CD8-positive, alpha-beta T cell (primary cell): ENCODE measurements at regions of chr1 and their contacts with region 1.

Region 1: DNA sequence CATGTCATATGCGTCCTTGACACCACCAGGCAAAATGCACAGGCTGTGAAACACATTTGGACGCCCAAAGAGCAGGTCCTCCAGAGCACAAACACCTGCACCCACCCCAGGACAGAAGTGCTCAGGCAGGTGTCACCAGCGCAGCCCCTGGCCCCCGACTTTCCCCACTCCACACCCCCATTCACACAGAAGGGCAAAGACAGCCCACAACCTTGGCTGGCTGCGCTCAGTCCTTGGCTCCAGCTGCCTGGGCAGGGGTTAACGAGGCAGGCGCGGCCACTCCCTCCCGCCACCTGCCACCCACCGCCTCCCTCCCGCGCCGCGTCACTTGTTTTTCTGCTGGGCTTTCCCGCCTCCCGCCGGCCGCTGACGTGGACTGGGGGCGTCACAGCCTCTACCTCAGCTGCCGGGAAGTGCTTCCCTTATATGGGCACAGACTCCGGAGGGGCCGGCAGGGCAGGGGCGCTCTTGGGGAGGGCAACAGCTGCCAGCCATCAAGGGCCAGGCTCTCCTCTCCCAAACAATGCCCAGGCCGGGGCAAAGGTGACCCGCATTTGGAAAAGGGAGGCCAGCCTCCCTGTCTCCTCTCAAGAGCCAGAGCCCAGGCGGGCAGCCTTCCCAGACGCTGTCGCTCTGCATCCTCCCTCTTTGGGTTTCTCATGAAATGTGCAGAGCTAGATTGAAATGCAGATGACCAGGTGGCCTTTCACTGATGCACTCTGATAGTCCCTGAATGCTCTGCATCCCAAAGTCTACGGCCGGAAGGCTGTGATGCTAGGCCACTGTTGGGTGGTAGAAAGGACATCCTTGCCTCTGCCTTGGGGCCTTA is 14.8 kb upstream of the BTG2 start:
- DNase-seq: peak; percentile 94 to 99 (median 98)
- ATAC-seq: peak; percentile 60
- H3K4me3 ChIP-seq: peak overlapping the region; percentile 29 to 61
- H3K4me3 Mint-ChIP-seq: peak overlapping the region; percentile 72
- H3K27ac ChIP-seq: peak overlapping the region; percentile 99 to 100
- H3K27ac Mint-ChIP-seq: peak overlapping the region; percentile 98
- H3K4me1 ChIP-seq: peaks cover 67% of the 10 kb centered on the region
- H3K4me1 Mint-ChIP-seq: peaks cover 85% of the 10 kb centered on the region
- H3K27me3 ChIP-seq: no peaks in the 10 kb centered on the region
- H3K27me3 Mint-ChIP-seq: no peaks in the 10 kb centered on the region
- CTCF ChIP-seq: no peak

Region 2: GRCh38 chr1:203273206-203273868 is 17.1 kb before region 1 on chr1:
- CTCF ChIA-PET with region 1: interaction called, 388 read pairs
- POLR2A ChIA-PET with region 1: interaction called, 51 read pairs
- intact Hi-C with region 1: loop called (anchors 1 kb)
- DNase-seq: peak; percentile 82 to 97 (median 92)
- ATAC-seq: peak; percentile 66
- H3K4me3 ChIP-seq: peak overlapping the region; percentile 37 to 63
- H3K4me3 Mint-ChIP-seq: peak overlapping the region; percentile 74
- H3K27ac ChIP-seq: peak overlapping the region; percentile 10 to 48
- H3K27ac Mint-ChIP-seq: peak overlapping the region; percentile 92
- H3K4me1 ChIP-seq: peaks cover 49% of the 10 kb centered on the region
- H3K4me1 Mint-ChIP-seq: peaks cover 52% of the 10 kb centered on the region
- H3K27me3 ChIP-seq: no peaks in the 10 kb centered on the region
- H3K27me3 Mint-ChIP-seq: no peaks in the 10 kb centered on the region
- CTCF ChIP-seq: peak; percentile 94

Region 3: DNA sequence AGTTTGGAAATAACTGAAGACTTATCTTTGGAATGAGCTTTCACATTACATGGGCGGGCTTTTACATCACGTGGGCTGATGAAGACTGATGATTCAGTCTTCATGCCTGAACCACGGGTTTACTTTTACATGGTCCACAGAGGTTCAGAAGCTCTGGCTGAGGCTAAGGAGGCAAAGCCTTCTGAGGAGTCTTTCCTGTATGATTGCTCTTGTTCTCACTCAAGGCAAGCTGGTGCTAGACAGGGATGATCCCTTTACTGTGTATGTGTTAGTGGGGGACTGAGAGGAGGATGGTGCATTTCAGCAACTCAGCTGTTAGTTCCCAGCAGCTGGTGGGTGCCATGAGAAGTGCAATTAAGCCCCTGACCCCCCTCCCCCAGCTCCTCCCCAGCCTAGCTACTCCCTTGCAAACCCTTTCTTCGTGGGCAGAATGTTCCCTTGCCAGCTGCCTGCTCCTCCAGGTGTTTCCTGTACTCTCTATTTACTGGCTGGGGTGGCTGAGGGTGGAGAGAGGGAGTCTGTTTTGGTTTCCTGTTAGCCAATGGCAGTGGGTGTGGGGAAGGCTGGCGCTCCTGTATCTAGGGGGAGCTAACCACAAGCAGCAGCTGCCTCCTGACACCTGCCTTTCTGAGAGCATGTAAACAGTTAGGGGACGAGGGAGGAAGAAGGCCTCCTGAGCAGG is 30.3 kb after region 1 on chr1:
- CTCF ChIA-PET with region 1: interaction called, 38 read pairs
- POLR2A ChIA-PET with region 1: interaction called, 155 read pairs
- intact Hi-C with region 1: loop called in 1 of 2 experiments (anchors 1 kb)
- DNase-seq: peak; percentile 50 to 91 (median 82)
- ATAC-seq: peak; percentile 62
- H3K4me3 ChIP-seq: peak overlapping the region in 1 of 2 experiments; percentile 12
- H3K4me3 Mint-ChIP-seq: peak overlapping the region; percentile 69
- H3K27ac ChIP-seq: peak overlapping the region; percentile 53 to 80
- H3K27ac Mint-ChIP-seq: peak overlapping the region; percentile 93
- H3K4me1 ChIP-seq: peaks cover 73% of the 10 kb centered on the region
- H3K4me1 Mint-ChIP-seq: peaks cover 88% of the 10 kb centered on the region
- H3K27me3 ChIP-seq: no peaks in the 10 kb centered on the region
- H3K27me3 Mint-ChIP-seq: no peaks in the 10 kb centered on the region
- CTCF ChIP-seq: no peak

Region 4: DNA sequence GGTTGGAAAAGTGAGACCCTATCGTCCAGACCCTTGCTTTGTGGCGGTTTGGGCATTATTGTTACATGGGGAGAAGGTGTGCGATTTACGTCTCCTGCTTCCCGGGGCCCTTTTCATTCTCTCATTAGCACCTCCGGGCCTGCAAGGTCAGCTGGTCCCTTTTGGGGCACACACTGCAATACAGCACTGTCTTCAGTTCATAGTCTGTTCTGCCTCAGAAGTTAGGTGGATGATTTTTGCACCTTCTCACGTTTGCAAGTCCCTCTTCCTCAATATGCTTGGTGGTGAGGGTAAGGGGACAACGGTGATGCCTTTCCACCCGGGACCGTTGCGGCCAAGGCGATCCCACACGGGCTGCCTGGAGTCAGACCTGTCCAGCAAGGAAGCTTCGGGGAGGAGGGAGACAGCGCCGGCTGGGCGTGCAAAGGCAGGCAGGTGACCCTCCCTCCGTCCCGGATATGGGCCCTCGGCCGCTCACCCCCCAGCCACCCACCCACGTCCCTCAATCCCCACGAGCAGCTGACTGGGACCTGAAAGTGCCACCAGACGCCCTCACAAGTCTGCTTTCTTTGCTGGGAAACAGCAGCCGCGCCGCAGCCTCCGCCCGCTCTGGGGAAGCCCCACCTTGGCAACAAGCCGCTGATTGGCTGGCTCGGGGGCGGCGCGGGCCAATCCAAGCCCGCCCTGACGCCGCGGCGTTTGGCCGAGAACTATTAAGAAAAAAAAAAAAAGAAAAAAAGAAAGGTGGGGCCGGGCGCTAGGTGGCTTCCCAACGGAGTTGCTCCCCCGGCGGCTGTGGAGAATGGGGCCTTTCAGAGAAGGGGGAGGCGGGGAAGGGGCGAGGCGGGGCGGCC is 36.6 kb after region 1 on chr1:
- CTCF ChIA-PET with region 1: interaction called, 174 read pairs
- POLR2A ChIA-PET with region 1: interaction called, 155 read pairs
- intact Hi-C with region 1: loop called (anchors 1 kb)
- DNase-seq: peak; percentile 86 to 97 (median 94)
- ATAC-seq: peak; percentile 67
- H3K4me3 ChIP-seq: peak overlapping the region; percentile 58 to 60
- H3K4me3 Mint-ChIP-seq: peak overlapping the region; percentile 74
- H3K27ac ChIP-seq: peak overlapping the region; percentile 92 to 97
- H3K27ac Mint-ChIP-seq: peak overlapping the region; percentile 93
- H3K4me1 ChIP-seq: peaks cover 65% of the 10 kb centered on the region
- H3K4me1 Mint-ChIP-seq: peaks cover 65% of the 10 kb centered on the region
- H3K27me3 ChIP-seq: no peaks in the 10 kb centered on the region
- H3K27me3 Mint-ChIP-seq: no peaks in the 10 kb centered on the region
- CTCF ChIP-seq: no peak

Region 5: DNA sequence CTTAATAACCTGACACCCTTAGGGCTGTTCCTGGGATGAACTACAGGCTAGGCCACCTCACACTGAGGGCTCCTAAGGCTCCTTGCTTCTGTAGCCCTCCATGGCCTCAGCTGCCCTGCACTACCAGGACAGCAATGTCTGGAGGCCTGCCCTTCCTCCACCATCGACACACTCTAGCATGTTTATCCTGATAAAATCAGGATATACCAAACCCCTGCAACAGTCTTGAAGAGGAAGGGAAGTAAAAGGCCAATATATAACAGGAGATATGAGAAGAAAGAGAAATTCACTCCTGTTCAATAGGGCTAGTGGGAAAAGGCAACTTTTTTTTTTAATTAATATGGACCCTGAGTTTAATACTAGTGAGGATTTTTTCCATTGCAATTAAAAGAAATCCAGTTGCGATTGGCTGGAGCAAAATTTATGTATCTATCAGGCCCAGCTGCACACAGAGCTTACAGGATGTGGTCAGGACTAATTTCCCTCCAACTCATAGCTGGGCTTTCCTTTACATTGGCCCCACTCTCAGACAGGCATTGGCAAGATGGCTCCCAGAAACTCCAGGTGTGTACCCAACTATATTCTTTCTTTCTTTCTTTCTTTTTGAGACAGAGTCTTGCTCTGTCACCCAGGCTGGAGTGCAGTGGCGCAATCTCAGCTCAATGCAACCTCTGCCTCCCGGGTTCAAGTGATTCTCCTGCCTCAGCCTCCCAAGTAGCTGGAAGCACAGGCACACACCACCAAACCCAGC is 322.6 kb after region 1 on chr1:
- CTCF ChIA-PET with region 1: no interaction called
- POLR2A ChIA-PET with region 1: no interaction called
- intact Hi-C with region 1: loop called in 1 of 2 experiments (anchors 5 kb)
- DNase-seq: peak in 2 of 9 experiments; percentile 37 to 57
- ATAC-seq: peak; percentile 49
- H3K4me3 ChIP-seq: no peak overlapping the region
- H3K4me3 Mint-ChIP-seq: no peak overlapping the region
- H3K27ac ChIP-seq: no peak overlapping the region
- H3K27ac Mint-ChIP-seq: no peak overlapping the region
- H3K4me1 ChIP-seq: peaks cover 10% of the 10 kb centered on the region
- H3K4me1 Mint-ChIP-seq: peaks cover 30% of the 10 kb centered on the region
- H3K27me3 ChIP-seq: no peaks in the 10 kb centered on the region
- H3K27me3 Mint-ChIP-seq: no peaks in the 10 kb centered on the region
- CTCF ChIP-seq: no peak